ENCODE measurements at regions of chr16 and their contacts with region 1.

Region 1: GRCh38 chr16:58661199-58661830 is 23.3 kb downstream of the SLC38A7 start:
- DNase-seq: peak; percentile 51 to 86
- H3K4me3 ChIP-seq: no peak overlapping the region
- H3K27ac ChIP-seq: no peak overlapping the region
- H3K4me1 ChIP-seq: no peaks in the 10 kb centered on the region
- H3K27me3 ChIP-seq: no peaks in the 10 kb centered on the region
- CTCF ChIP-seq: peak; percentile 73

Region 2: GRCh38 chr16:58280836-58281301 is 380.4 kb before region 1 on chr16:
- CTCF ChIA-PET with region 1: no interaction called
- POLR2A ChIA-PET with region 1: no interaction called
- intact Hi-C with region 1: no loop called
- DNase-seq: peak; percentile 24 to 85
- H3K4me3 ChIP-seq: 0 out of 2 replicates have a peak overlapping the region, but pooled peaks have one; percentile 5
- H3K27ac ChIP-seq: peak overlapping the region; percentile 70
- H3K4me1 ChIP-seq: peaks cover 16% of the 10 kb centered on the region
- H3K27me3 ChIP-seq: no peaks in the 10 kb centered on the region
- CTCF ChIP-seq: no peak

Region 3: GRCh38 chr16:58299757-58300349 is 361.5 kb before region 1 on chr16:
- CTCF ChIA-PET with region 1: no interaction called
- POLR2A ChIA-PET with region 1: no interaction called
- intact Hi-C with region 1: loop called (anchors 5 kb)
- DNase-seq: peak; percentile 36 to 41
- H3K4me3 ChIP-seq: no peak overlapping the region
- H3K27ac ChIP-seq: no peak overlapping the region
- H3K4me1 ChIP-seq: no peaks in the 10 kb centered on the region
- H3K27me3 ChIP-seq: no peaks in the 10 kb centered on the region
- CTCF ChIP-seq: peak; percentile 91

Region 4: GRCh38 chr16:58329147-58329546 is 332.2 kb before region 1 on chr16:
- CTCF ChIA-PET with region 1: interaction called, 10 read pairs
- POLR2A ChIA-PET with region 1: no interaction called
- intact Hi-C with region 1: no loop called
- DNase-seq: peak; percentile 19 to 78
- H3K4me3 ChIP-seq: no peak overlapping the region
- H3K27ac ChIP-seq: no peak overlapping the region
- H3K4me1 ChIP-seq: peaks cover 26% of the 10 kb centered on the region
- H3K27me3 ChIP-seq: no peaks in the 10 kb centered on the region
- CTCF ChIP-seq: no peak

Region 5: GRCh38 chr16:58336332-58337089 is 324.8 kb before region 1 on chr16:
- CTCF ChIA-PET with region 1: interaction called, 4 read pairs
- POLR2A ChIA-PET with region 1: no interaction called
- intact Hi-C with region 1: loop called (anchors 2 kb)
- DNase-seq: peak; percentile 77 to 88
- H3K4me3 ChIP-seq: peak overlapping the region; percentile 23; the same call in 1 of the 2 replicates
- H3K27ac ChIP-seq: no peak overlapping the region
- H3K4me1 ChIP-seq: peaks cover 24% of the 10 kb centered on the region
- H3K27me3 ChIP-seq: no peaks in the 10 kb centered on the region
- CTCF ChIP-seq: peak; percentile 93

Region 6: DNA sequence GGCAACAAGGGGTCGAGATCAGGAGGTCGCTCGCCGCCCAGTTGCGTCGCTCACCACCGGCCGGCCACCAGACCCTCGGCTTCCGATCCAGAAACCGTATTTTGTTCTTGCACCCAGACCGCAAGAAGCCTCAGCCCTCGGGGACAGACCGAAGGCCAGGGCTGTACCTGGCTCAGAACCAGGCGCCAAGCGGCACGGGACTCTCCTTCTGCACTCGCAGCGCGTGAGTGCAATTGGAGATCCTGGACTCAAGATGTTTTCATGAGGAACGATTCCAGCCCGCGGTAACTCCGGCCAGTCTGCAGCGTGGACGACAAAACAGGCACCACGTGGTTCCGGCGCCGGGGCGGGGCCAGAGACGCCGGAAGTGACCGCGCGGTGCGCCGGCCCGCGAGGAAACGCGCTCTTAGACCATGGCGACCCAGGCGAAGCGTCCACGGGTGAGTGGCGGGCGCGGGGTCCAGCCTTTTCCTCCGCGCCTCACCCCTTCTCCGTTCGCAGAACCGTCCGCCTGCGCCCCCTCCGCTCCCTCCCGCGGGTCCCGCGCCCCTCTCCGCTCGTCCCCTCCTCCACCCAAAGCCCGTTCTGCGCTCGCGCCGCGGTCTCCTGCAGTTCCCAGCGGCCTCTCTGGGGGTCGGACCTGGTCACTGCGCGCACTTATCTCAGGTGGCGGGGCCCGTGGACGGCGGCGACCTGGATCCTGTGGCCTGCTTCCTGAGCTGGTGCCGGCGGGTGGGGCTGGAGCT is 146.0 kb before region 1 on chr16 and contains the start of gene SETD6:
- CTCF ChIA-PET with region 1: interaction called, 3 read pairs
- POLR2A ChIA-PET with region 1: interaction called, 6 read pairs
- intact Hi-C with region 1: loop called (anchors 2 kb)
- DNase-seq: peak; percentile 77 to 88
- H3K4me3 ChIP-seq: peak within 1 kb of the TSS; percentile 99
- H3K27ac ChIP-seq: peak within 1 kb of the TSS; percentile 54
- H3K4me1 ChIP-seq: peaks cover 20% of the 10 kb centered on the region
- H3K27me3 ChIP-seq: no peaks in the 10 kb centered on the region
- CTCF ChIP-seq: no peak; the same call in 1 of the 2 replicates
- total RNA-seq, gene SETD6: 19.2 and 21.4 TPM in 2 replicates

Region 7: GRCh38 chr16:58551496-58551895 is 109.8 kb before region 1 on chr16:
- CTCF ChIA-PET with region 1: interaction called, 11 read pairs
- POLR2A ChIA-PET with region 1: no interaction called
- intact Hi-C with region 1: no loop called
- DNase-seq: no peak
- H3K4me3 ChIP-seq: no peak overlapping the region
- H3K27ac ChIP-seq: no peak overlapping the region
- H3K4me1 ChIP-seq: no peaks in the 10 kb centered on the region
- H3K27me3 ChIP-seq: no peaks in the 10 kb centered on the region
- CTCF ChIP-seq: no peak

Region 8: GRCh38 chr16:58629572-58630104 is 31.7 kb before region 1 on chr16 and contains the start of gene CNOT1:
- CTCF ChIA-PET with region 1: no interaction called
- POLR2A ChIA-PET with region 1: no interaction called
- intact Hi-C with region 1: loop called (anchors 2 kb)
- DNase-seq: peak; percentile 98 to 99
- H3K4me3 ChIP-seq: peak within 1 kb of the TSS; percentile 77
- H3K27ac ChIP-seq: peak within 1 kb of the TSS; percentile 90
- H3K4me1 ChIP-seq: peaks cover 14% of the 10 kb centered on the region
- H3K27me3 ChIP-seq: no peaks in the 10 kb centered on the region
- CTCF ChIP-seq: no peak
- total RNA-seq, gene CNOT1: 141 and 233 TPM in 2 replicates

Region 9: DNA sequence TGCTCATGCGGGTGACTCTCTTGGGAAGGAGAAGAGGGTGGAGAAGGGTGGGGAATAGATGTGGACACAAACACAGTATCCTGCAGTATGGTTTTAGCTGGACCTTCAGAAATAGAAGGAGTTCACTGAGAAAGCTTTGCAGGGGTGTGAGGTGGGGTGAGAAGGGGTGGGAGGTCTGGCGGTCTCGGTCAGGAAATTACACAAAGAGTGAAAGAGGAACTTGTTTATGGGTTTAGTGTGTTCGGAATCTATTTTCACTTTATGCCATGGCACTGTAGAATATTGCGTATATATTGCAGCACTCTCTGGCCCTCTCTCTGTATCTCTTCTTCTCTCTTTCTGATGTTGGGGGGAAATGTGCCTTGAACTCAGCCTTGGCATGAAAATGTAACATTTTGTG is 221.0 kb after region 1 on chr16:
- CTCF ChIA-PET with region 1: no interaction called
- POLR2A ChIA-PET with region 1: no interaction called
- intact Hi-C with region 1: no loop called
- DNase-seq: no peak
- H3K4me3 ChIP-seq: no peak overlapping the region
- H3K27ac ChIP-seq: no peak overlapping the region
- H3K4me1 ChIP-seq: no peaks in the 10 kb centered on the region
- H3K27me3 ChIP-seq: no peaks in the 10 kb centered on the region
- CTCF ChIP-seq: no peak